PC-3 (cell line): ENCODE measurements at regions of chr5 and their contacts with region 1.

Region 1: DNA sequence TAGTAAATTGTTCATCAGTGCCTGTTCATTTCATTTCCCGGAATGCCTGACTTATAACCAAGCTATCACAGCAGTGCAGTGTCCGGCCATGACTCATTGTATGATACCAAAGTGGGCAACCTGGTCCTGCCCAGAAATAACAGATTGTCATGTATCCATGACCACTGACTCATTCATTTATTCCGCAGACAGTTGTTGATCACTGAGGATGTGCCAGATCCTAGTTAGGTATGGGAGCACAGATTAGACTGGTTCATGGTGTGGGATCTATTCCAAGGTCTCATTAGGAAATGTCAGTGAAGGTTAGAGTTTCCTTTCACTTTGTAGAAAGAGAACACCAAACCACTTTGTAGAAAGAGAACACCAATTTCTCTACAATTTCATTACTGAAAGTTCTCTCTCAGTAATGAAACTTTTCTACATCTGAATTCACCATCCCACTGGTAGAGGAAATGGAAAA is 8.7 kb downstream of the NREP start:
- DNase-seq: peak; percentile 95
- ATAC-seq: peak; percentile 80
- H3K4me3 ChIP-seq: peak overlapping the region; percentile 56; the same call in 1 of the 2 replicates
- H3K27ac ChIP-seq: peak overlapping the region; percentile 99
- H3K4me1 ChIP-seq: peaks cover 48% of the 10 kb centered on the region
- H3K27me3 ChIP-seq: no peaks in the 10 kb centered on the region
- CTCF ChIP-seq: no peak

Region 2: GRCh38 chr5:111511174-111511830 is 237.0 kb before region 1 on chr5:
- CTCF ChIA-PET with region 1: no interaction called
- POLR2A ChIA-PET with region 1: no interaction called
- intact Hi-C with region 1: no loop called
- DNase-seq: no peak
- ATAC-seq: no peak
- H3K4me3 ChIP-seq: peak overlapping the region; percentile 86
- H3K27ac ChIP-seq: no peak overlapping the region
- H3K4me1 ChIP-seq: peaks cover 14% of the 10 kb centered on the region
- H3K27me3 ChIP-seq: no peaks in the 10 kb centered on the region
- CTCF ChIP-seq: no peak

Region 3: GRCh38 chr5:111550279-111551020 is 197.9 kb before region 1 on chr5:
- CTCF ChIA-PET with region 1: interaction called, 4 read pairs
- POLR2A ChIA-PET with region 1: no interaction called
- intact Hi-C with region 1: loop called (anchors 2 kb)
- DNase-seq: peak; percentile 97
- ATAC-seq: peak; percentile 89
- H3K4me3 ChIP-seq: no peak overlapping the region
- H3K27ac ChIP-seq: peak overlapping the region; percentile 54
- H3K4me1 ChIP-seq: peaks cover 21% of the 10 kb centered on the region
- H3K27me3 ChIP-seq: no peaks in the 10 kb centered on the region
- CTCF ChIP-seq: peak; percentile 80

Region 4: GRCh38 chr5:111703662-111704061 is 44.7 kb before region 1 on chr5:
- CTCF ChIA-PET with region 1: no interaction called
- POLR2A ChIA-PET with region 1: no interaction called
- intact Hi-C with region 1: loop called (anchors 5 kb)
- DNase-seq: no peak
- ATAC-seq: no peak
- H3K4me3 ChIP-seq: no peak overlapping the region
- H3K27ac ChIP-seq: no peak overlapping the region
- H3K4me1 ChIP-seq: peaks cover 39% of the 10 kb centered on the region
- H3K27me3 ChIP-seq: no peaks in the 10 kb centered on the region
- CTCF ChIP-seq: no peak

Region 5: DNA sequence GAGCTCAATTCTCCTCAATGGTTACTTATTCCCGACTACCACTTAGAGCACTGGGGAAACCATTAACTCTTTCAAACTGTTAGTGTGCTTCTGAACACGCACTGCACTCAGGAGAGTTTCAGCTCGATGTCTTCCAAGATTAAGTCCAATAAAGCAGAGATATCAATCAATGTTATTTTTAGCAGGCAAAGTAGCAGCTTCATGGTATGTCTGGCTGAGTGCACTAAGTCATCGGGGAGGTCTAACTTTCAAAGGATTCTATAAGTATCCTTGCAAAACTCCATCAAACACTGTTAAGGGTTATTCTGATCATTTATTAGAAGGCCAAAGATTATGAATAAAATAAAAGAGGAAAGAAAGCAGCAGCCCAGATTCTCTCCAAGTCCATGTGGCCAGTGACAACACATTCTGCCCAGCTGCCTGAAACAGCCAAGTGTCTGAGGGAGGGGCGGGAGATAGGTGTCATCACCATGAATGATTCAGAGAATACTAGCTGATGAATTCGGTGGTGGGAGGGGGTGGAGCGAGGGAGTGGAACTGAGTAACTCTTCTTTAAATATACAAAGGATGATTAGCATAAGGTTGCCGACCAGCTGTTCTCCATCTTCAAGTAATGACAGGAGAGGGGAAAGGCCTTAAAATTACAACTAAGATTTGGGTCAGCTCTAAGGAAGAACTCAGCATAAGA is 12.6 kb before region 1 on chr5:
- CTCF ChIA-PET with region 1: no interaction called
- POLR2A ChIA-PET with region 1: no interaction called
- intact Hi-C with region 1: loop called (anchors 1 kb)
- DNase-seq: peak; percentile 83
- ATAC-seq: peak; percentile 76
- H3K4me3 ChIP-seq: no peak overlapping the region
- H3K27ac ChIP-seq: no peak overlapping the region
- H3K4me1 ChIP-seq: peaks cover 49% of the 10 kb centered on the region
- H3K27me3 ChIP-seq: no peaks in the 10 kb centered on the region
- CTCF ChIP-seq: no peak